AG04449 (cell line): ENCODE measurements at regions of chr12 and their contacts with region 1.

Region 1: DNA sequence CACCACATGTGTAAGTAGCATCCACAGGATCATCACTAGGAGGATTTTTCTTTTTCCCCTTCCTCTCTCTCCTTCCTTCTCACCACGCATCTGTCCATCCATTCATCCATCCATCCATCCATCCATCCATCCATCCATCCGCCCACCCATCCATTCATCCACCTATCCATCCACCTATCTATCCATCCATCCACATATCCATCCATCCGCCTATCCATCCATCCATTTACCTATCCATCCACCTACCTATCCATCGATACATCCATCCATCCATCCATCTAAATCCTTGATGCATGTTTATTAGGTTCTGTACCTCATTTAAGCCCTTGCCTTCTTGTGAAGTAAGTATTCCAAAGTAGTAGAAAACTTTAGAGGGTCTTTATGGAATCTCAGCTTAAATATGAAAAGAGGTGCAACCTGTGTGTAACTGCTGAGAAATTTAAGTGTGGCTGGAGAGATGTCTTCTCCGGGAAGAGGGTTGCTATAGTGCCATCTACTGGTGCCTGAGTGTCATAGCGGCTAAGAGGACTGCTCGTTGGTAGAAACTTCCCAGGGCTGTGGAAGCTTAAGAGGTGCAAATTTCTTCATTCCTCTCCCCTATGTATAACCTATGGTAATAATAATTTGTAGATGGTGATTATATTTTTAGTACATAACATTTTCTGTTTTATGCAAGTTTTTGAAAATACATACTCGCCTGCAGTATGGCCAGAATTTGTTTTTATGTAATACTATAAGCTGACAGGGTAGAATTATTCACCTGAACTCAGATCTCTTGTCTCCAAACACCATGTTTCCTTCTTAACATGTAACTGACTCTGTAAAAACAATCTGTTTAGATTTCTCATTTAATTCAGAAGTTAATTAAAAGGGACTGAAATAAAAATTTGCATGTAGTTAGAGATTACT is 46.0 kb downstream of the MYO1H start:
- DNase-seq: no peak
- H3K4me3 ChIP-seq: no peak overlapping the region
- CTCF ChIP-seq: peak; percentile 82

Region 2: GRCh38 chr12:109377139-109377685 is 16.5 kb before region 1 on chr12:
- CTCF ChIA-PET with region 1: interaction called, 97 read pairs
- POLR2A ChIA-PET with region 1: no interaction called
- DNase-seq: no peak
- H3K4me3 ChIP-seq: no peak overlapping the region
- CTCF ChIP-seq: no peak

Region 3: DNA sequence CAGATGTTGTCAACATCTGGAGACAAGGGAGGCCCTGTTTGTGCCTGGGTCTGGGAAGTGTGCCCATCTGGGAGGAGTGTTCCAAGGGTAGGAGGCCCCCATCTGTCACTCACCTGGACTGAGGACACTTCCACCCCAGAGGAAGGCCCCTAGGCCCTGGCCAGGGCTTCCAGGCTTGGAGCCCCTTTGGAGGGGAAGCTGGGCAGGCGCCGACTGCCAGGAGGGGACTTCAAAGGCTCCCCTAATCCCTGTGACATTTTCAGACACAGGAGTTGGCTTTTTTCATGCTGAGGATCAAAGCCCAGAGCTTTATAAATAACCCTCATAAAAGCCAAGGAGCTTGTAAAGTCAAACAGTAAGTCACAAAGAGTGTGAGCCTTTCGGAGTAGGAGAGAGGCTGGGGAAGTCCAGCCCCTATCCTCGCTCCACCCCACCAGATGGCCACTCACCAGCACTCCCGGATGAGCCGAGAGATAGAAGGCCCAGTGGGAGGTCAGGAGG is 302.3 kb after region 1 on chr12:
- CTCF ChIA-PET with region 1: no interaction called
- POLR2A ChIA-PET with region 1: no interaction called
- DNase-seq: no peak
- H3K4me3 ChIP-seq: no peak overlapping the region
- CTCF ChIP-seq: no peak